ENCODE measurements at regions of chr6 and their contacts with region 1.

Region 1: GRCh38 chr6:137799950-137800568 is 67.0 kb upstream of the TNFAIP3 start:
- DNase-seq: peak; percentile 63
- ATAC-seq: peak; percentile 60; the same call in 1 of the 2 replicates
- H3K4me3 ChIP-seq: no peak overlapping the region
- H3K27ac ChIP-seq: no peak overlapping the region
- H3K4me1 ChIP-seq: no peaks in the 10 kb centered on the region
- H3K27me3 ChIP-seq: no peaks in the 10 kb centered on the region
- CTCF ChIP-seq: peak; percentile 67

Region 2: GRCh38 chr6:137866914-137867684 is 67.0 kb after region 1 on chr6 and contains the start of gene TNFAIP3:
- CTCF ChIA-PET with region 1: interaction called, 5 read pairs
- POLR2A ChIA-PET with region 1: interaction called, 4 read pairs
- intact Hi-C with region 1: loop called (anchors 2 kb)
- DNase-seq: peak; percentile 90
- ATAC-seq: peak; percentile 82
- H3K4me3 ChIP-seq: peak within 1 kb of the TSS; percentile 90
- H3K27ac ChIP-seq: peak within 1 kb of the TSS; percentile 68
- H3K4me1 ChIP-seq: peaks cover 31% of the 10 kb centered on the region
- H3K27me3 ChIP-seq: no peaks in the 10 kb centered on the region
- CTCF ChIP-seq: peak; percentile 47
- total RNA-seq, gene TNFAIP3: 21.9 TPM in 2 replicates

Region 3: GRCh38 chr6:137893726-137894125 is 93.7 kb after region 1 on chr6:
- CTCF ChIA-PET with region 1: interaction called, 13 read pairs
- POLR2A ChIA-PET with region 1: no interaction called
- intact Hi-C with region 1: no loop called
- DNase-seq: peak; percentile 48
- ATAC-seq: no peak
- H3K4me3 ChIP-seq: no peak overlapping the region
- H3K27ac ChIP-seq: no peak overlapping the region
- H3K4me1 ChIP-seq: peaks cover 17% of the 10 kb centered on the region
- H3K27me3 ChIP-seq: no peaks in the 10 kb centered on the region
- CTCF ChIP-seq: no peak

Region 4: GRCh38 chr6:137944793-137945498 is 144.9 kb after region 1 on chr6:
- CTCF ChIA-PET with region 1: no interaction called
- POLR2A ChIA-PET with region 1: no interaction called
- intact Hi-C with region 1: loop called (anchors 1 kb)
- DNase-seq: peak; percentile 48
- ATAC-seq: peak; percentile 70
- H3K4me3 ChIP-seq: no peak overlapping the region
- H3K27ac ChIP-seq: no peak overlapping the region
- H3K4me1 ChIP-seq: peaks cover 6% of the 10 kb centered on the region; the same call in 1 of the 2 replicates
- H3K27me3 ChIP-seq: no peaks in the 10 kb centered on the region
- CTCF ChIP-seq: peak; percentile 73

Region 5: DNA sequence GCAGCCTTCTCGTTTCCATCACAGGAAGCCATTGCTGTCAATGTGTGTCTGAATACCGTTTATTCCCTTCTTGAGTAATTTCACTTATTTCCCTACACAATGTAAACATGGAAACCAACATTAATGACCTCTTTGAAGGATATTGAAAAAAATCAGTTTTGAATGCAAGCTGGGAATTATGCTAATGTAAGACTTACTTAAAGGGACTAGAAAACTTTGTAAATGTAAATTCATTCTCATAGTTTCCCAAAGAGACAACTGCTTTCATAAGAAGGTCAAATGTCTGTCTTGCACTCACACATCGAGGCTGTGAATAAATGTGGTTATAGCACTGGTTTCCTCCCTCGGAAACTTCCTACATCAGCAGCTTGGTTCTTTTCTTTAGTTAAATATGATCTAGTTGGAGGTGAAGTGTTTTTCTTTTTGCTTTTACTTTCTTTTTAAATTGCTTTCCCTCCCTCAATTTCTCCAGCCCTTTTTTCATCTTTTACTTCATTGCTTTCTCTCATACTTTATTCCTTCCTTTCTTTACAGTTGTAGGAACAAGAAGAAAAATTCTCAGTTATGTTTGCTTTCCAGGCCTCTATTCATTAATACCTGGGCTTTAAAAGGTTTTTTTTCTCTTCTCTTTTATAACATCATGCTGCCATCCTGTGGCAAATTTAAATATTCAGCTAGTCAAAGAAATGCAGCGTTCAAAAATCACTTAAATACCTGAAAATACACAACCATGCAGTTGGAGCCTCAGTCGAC is 175.3 kb after region 1 on chr6:
- CTCF ChIA-PET with region 1: no interaction called
- POLR2A ChIA-PET with region 1: no interaction called
- intact Hi-C with region 1: loop called (anchors 1 kb)
- DNase-seq: peak; percentile 54
- ATAC-seq: no peak
- H3K4me3 ChIP-seq: no peak overlapping the region
- H3K27ac ChIP-seq: no peak overlapping the region
- H3K4me1 ChIP-seq: peaks cover 13% of the 10 kb centered on the region
- H3K27me3 ChIP-seq: no peaks in the 10 kb centered on the region
- CTCF ChIP-seq: peak; percentile 61